ENCODE measurements at regions of chr3 and their contacts with region 1.

Region 1: DNA sequence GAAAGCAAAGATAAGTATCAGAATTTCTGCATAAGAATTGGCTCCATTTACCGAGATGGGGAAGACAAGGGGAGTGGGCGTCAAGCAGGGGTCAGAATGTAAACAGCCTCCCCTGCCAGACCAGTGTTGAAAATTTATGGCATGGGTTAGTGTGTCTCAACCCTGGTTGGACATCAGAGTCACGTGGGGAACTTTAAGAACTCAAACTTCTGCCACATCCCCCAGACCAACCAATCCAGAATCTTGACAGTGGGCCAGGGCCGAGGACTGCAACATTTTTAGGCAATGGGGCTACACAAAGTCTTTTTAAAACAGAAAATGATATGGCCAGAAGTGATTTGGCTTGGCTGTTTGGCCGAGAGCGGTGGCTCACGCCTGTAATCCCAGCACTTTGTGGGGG is 14.3 kb upstream of the MASP1 start:
- DNase-seq: no peak
- ATAC-seq: no peak
- H3K4me3 ChIP-seq: no peak overlapping the region
- H3K4me3 Mint-ChIP-seq: no peak overlapping the region
- H3K27ac ChIP-seq: no peak overlapping the region
- H3K27ac Mint-ChIP-seq: no peak overlapping the region
- H3K4me1 ChIP-seq: no peaks in the 10 kb centered on the region
- H3K4me1 Mint-ChIP-seq: no peaks in the 10 kb centered on the region
- H3K27me3 ChIP-seq: peaks cover 0 to under 1% of the 10 kb centered on the region in 2 experiments
- H3K27me3 Mint-ChIP-seq: peaks cover 22% of the 10 kb centered on the region
- CTCF ChIP-seq: no peak

Region 2: GRCh38 chr3:187327845-187328244 is 22.0 kb after region 1 on chr3:
- CTCF ChIA-PET with region 1: no interaction called
- POLR2A ChIA-PET with region 1: no interaction called
- intact Hi-C with region 1: loop called in 1 of 2 experiments (anchors 2 kb)
- DNase-seq: no peak
- ATAC-seq: no peak
- H3K4me3 ChIP-seq: no peak overlapping the region
- H3K4me3 Mint-ChIP-seq: no peak overlapping the region
- H3K27ac ChIP-seq: no peak overlapping the region
- H3K27ac Mint-ChIP-seq: no peak overlapping the region
- H3K4me1 ChIP-seq: no peaks in the 10 kb centered on the region
- H3K4me1 Mint-ChIP-seq: no peaks in the 10 kb centered on the region
- H3K27me3 ChIP-seq: no peaks in the 10 kb centered on the region
- H3K27me3 Mint-ChIP-seq: peaks cover 3% of the 10 kb centered on the region
- CTCF ChIP-seq: no peak

Region 3: GRCh38 chr3:187456250-187456649 is 150.4 kb after region 1 on chr3:
- CTCF ChIA-PET with region 1: no interaction called
- POLR2A ChIA-PET with region 1: no interaction called
- intact Hi-C with region 1: no loop called
- DNase-seq: no peak
- ATAC-seq: no peak
- H3K4me3 ChIP-seq: no peak overlapping the region
- H3K4me3 Mint-ChIP-seq: no peak overlapping the region
- H3K27ac ChIP-seq: no peak overlapping the region
- H3K27ac Mint-ChIP-seq: no peak overlapping the region
- H3K4me1 ChIP-seq: no peaks in the 10 kb centered on the region
- H3K4me1 Mint-ChIP-seq: no peaks in the 10 kb centered on the region
- H3K27me3 ChIP-seq: no peaks in the 10 kb centered on the region
- H3K27me3 Mint-ChIP-seq: peaks cover 20% of the 10 kb centered on the region
- CTCF ChIP-seq: no peak